Transverse colon (tissue), 4 donors: ENCODE measurements at regions of chr17 and their contacts with region 1.

Region 1: GRCh38 chr17:56358651-56359050 is 205.4 kb downstream of the ANKFN1 start:
- DNase-seq: no peak
- H3K4me3 ChIP-seq: no peak overlapping the region
- H3K27ac ChIP-seq: no peak overlapping the region
- H3K4me1 ChIP-seq: no peaks in the 10 kb centered on the region
- H3K27me3 ChIP-seq: no peaks in the 10 kb centered on the region
- CTCF ChIP-seq: no peak
- EP300 ChIP-seq: no peak
- POLR2A ChIP-seq: no peak

Region 2: GRCh38 chr17:56269556-56270389 is 88.9 kb before region 1 on chr17:
- in situ Hi-C with region 1: loop called in 1 of 4 experiments (anchors 25 kb)
- intact Hi-C with region 1: no loop called
- DNase-seq: no peak
- H3K4me3 ChIP-seq: no peak overlapping the region
- H3K27ac ChIP-seq: no peak overlapping the region
- H3K4me1 ChIP-seq: no peaks in the 10 kb centered on the region
- H3K27me3 ChIP-seq: no peaks in the 10 kb centered on the region
- CTCF ChIP-seq: no peak
- EP300 ChIP-seq: no peak
- POLR2A ChIP-seq: no peak

Region 3: DNA sequence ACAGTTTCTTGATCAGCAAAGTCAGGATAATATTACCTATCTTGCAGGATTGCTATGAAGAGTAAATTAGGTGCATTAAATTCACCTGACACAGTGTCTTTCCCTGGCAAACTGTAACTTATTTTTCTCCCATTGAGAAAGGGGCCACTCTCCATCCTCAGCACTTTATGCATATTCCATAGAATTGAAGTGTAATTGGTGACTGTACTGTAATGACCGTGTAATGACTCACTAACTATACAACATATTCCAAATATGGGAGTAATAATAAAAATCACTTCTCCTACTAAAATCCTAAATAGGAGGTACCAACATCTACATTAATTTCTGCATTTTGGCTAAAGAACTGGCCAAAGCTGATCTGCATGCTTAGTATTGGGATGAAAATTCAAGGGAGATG is 93.0 kb after region 1 on chr17:
- in situ Hi-C with region 1: loop called in 1 of 4 experiments (anchors 25 kb)
- intact Hi-C with region 1: no loop called
- DNase-seq: no peak
- H3K4me3 ChIP-seq: no peak overlapping the region
- H3K27ac ChIP-seq: no peak overlapping the region
- H3K4me1 ChIP-seq: no peaks in the 10 kb centered on the region
- H3K27me3 ChIP-seq: no peaks in the 10 kb centered on the region
- CTCF ChIP-seq: no peak
- EP300 ChIP-seq: no peak
- POLR2A ChIP-seq: no peak